MCF 10A (cell line): ENCODE measurements at regions of chr7 and their contacts with region 1.

Region 1: DNA sequence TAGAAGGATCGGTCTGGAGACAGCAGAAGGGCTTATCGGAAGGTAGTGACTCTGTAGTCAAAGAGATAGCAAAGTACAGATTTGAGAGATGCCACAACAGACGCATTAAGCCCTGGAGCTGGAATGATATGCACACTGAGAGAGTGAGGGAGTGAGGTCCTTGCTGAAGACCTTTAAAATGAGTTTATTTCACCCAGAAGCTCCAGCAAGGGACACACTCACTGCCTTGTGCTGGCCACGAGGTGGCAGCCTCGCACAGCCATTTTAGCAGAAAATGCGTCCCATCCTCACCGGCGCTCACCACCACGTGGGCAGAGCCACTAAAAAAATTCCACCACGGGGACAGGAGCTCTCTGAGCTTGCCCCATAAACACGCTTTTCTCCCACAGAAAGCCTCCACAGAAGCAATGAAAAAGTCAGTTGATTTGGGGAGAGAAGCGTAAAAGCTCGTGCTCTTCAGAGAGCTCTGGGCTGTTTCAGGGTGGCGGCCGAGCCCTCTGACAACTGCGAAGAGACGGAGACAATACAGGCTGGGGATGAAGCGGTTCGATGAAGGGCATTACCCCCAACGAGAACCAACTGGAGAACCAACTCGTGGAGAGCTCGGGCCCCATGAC is 163.0 kb upstream of the KLF14 start:
- DNase-seq: peak; percentile 74
- H3K4me3 Mint-ChIP-seq: peak overlapping the region; percentile 35
- H3K27ac Mint-ChIP-seq: peak overlapping the region; percentile 76
- H3K4me1 Mint-ChIP-seq: peaks cover 83% of the 10 kb centered on the region
- H3K27me3 Mint-ChIP-seq: no peaks in the 10 kb centered on the region
- CTCF ChIP-seq: peak; percentile 63

Region 2: GRCh38 chr7:130912862-130913631 is 16.0 kb after region 1 on chr7:
- CTCF ChIA-PET with region 1: interaction called, 105 read pairs
- POLR2A ChIA-PET with region 1: no interaction called
- intact Hi-C with region 1: loop called (anchors 2 kb)
- DNase-seq: peak; percentile 95
- H3K4me3 Mint-ChIP-seq: peak overlapping the region; percentile 86
- H3K27ac Mint-ChIP-seq: peak overlapping the region; percentile 89
- H3K4me1 Mint-ChIP-seq: peaks cover 68% of the 10 kb centered on the region
- H3K27me3 Mint-ChIP-seq: no peaks in the 10 kb centered on the region
- CTCF ChIP-seq: no peak

Region 3: DNA sequence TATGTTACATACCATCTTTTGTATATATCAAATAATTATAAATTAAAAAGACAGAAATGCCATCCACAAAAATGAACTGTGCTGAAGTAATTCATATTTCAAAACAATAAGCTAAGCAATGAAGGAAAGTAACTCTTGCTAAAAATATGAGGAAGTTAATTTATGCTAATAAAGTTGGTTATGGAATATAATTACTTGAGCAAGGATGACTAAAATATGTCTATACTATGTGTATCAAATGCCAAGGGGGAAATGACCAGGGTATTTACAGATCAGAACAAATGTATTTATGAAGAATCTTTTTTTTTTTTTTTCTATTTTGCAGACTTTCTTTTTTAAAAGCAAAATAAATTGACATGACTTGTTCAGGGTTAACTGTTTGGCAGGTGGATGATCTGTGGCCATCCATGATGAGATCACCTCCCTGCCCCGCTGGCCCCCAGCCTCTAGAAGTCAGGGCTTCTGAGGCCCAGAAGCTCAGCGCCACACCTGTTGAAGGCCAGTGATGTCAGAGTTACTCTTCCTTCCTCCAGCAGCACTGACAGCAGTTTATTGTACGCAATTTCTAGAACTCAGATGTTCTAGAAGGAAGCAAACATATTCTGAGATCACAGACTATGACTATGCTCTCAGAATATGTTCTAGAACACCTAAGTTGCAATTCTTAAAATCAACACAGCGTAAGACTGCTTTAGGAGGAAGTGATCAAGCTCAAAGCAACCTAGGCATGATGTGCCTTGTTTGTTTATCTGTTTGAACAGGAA is 33.1 kb after region 1 on chr7:
- CTCF ChIA-PET with region 1: interaction called, 123 read pairs
- POLR2A ChIA-PET with region 1: interaction called, 4 read pairs
- intact Hi-C with region 1: no loop called
- DNase-seq: no peak
- H3K4me3 Mint-ChIP-seq: no peak overlapping the region
- H3K27ac Mint-ChIP-seq: peak overlapping the region; percentile 79
- H3K4me1 Mint-ChIP-seq: peaks cover 33% of the 10 kb centered on the region
- H3K27me3 Mint-ChIP-seq: no peaks in the 10 kb centered on the region
- CTCF ChIP-seq: no peak

Region 4: DNA sequence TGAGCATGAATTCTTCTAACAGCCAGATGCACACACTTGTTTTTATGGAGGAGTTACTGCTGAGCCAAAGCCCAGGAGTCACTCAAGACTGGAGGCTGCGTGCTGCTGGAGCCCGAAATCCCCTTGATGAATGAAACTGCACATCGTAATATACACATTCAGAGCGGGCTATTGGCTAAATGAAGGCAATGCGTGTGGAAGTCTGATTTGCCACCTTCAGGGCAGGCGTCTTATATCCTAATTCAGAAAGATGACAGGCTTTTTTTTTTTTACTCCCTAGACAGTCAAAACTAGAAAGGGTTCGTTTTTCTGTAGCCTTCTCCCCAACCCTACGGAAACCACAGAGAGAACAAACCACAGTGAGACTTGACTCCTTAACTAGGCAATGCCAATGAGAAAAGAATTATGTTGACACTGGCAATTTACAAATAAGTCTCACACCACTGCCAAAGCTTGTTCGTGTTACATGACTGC is 64.2 kb after region 1 on chr7:
- CTCF ChIA-PET with region 1: interaction called, 51 read pairs
- POLR2A ChIA-PET with region 1: interaction called, 93 read pairs
- intact Hi-C with region 1: no loop called
- DNase-seq: peak; percentile 91
- H3K4me3 Mint-ChIP-seq: peak overlapping the region; percentile 76
- H3K27ac Mint-ChIP-seq: peak overlapping the region; percentile 94
- H3K4me1 Mint-ChIP-seq: peaks cover 48% of the 10 kb centered on the region
- H3K27me3 Mint-ChIP-seq: no peaks in the 10 kb centered on the region
- CTCF ChIP-seq: no peak

Region 5: DNA sequence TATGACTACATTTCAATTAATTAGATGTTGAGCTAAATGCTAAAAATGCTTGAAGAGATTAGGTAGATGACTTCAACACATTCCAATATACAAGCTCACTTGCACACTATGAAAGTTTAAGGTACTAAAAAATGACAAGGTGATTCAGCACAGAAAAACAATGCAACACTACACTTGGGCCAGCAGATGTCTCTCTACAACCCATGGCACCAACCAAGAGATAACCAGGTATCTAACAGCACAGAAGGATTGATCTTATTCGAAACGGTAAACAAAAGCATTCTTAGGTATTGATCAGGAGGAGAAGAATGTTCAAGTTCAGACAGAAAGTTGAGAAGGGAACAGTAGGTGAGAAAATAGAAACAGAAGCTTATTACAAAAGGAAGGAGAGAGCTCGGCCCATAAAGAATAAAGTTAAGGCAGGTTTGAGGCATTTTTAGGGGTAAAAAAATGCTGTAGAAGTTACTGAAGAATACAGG is 85.2 kb after region 1 on chr7:
- CTCF ChIA-PET with region 1: interaction called, 50 read pairs
- POLR2A ChIA-PET with region 1: interaction called, 6 read pairs
- intact Hi-C with region 1: no loop called
- DNase-seq: peak; percentile 69
- H3K4me3 Mint-ChIP-seq: no peak overlapping the region
- H3K27ac Mint-ChIP-seq: no peak overlapping the region
- H3K4me1 Mint-ChIP-seq: peaks cover 21% of the 10 kb centered on the region
- H3K27me3 Mint-ChIP-seq: no peaks in the 10 kb centered on the region
- CTCF ChIP-seq: peak; percentile 68

Region 6: DNA sequence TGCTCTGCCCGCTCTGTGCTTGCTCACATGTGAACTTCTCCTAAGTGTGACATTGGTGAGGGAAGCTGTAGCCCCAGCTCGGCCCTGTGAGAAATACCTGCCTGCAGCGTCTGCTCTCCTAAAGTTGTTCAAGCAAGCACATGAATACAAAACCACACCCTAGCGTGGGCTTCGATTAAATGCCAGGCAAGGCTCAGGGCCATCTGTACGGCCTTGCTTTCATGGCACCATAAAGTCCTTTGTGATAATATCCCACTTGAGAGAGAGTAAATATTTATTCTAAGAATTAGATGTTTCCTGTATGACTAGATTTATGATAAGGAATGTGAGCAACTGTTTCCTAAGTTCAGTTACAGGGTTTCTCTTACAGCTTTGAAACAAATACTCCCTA is 99.8 kb after region 1 on chr7:
- CTCF ChIA-PET with region 1: interaction called, 42 read pairs
- POLR2A ChIA-PET with region 1: interaction called, 17 read pairs
- intact Hi-C with region 1: no loop called
- DNase-seq: peak; percentile 73
- H3K4me3 Mint-ChIP-seq: peak overlapping the region; percentile 21
- H3K27ac Mint-ChIP-seq: peak overlapping the region; percentile 96
- H3K4me1 Mint-ChIP-seq: peaks cover 54% of the 10 kb centered on the region
- H3K27me3 Mint-ChIP-seq: no peaks in the 10 kb centered on the region
- CTCF ChIP-seq: no peak

Region 7: DNA sequence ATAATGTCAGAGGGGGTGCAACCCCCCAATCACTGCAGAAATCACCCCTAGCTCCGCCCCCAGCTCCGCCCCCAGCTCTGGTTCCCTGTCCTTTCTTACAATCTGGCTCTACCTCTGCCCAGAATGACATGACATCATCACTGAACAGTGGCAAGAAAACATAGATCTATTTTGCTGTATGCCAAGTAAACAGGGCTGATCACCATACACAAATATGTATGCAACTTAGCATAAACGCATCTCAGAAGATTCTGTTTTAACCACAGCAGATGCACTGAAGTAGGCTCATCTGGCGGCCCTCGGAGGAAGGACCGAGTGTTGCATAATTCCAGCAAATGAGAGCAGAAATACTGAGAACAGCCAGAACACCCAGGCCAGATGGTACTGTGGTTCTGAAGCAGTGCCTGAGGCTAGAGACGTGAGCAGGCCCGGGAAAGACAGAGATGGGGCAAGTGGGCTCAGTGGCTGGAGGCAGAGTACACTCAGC is 130.3 kb after region 1 on chr7:
- CTCF ChIA-PET with region 1: interaction called, 22 read pairs
- POLR2A ChIA-PET with region 1: interaction called, 9 read pairs
- intact Hi-C with region 1: no loop called
- DNase-seq: peak; percentile 89
- H3K4me3 Mint-ChIP-seq: peak overlapping the region; percentile 64
- H3K27ac Mint-ChIP-seq: peak overlapping the region; percentile 88
- H3K4me1 Mint-ChIP-seq: peaks cover 31% of the 10 kb centered on the region
- H3K27me3 Mint-ChIP-seq: no peaks in the 10 kb centered on the region
- CTCF ChIP-seq: no peak